ENCODE measurements at regions of chr1 and their contacts with region 1.

Region 1: DNA sequence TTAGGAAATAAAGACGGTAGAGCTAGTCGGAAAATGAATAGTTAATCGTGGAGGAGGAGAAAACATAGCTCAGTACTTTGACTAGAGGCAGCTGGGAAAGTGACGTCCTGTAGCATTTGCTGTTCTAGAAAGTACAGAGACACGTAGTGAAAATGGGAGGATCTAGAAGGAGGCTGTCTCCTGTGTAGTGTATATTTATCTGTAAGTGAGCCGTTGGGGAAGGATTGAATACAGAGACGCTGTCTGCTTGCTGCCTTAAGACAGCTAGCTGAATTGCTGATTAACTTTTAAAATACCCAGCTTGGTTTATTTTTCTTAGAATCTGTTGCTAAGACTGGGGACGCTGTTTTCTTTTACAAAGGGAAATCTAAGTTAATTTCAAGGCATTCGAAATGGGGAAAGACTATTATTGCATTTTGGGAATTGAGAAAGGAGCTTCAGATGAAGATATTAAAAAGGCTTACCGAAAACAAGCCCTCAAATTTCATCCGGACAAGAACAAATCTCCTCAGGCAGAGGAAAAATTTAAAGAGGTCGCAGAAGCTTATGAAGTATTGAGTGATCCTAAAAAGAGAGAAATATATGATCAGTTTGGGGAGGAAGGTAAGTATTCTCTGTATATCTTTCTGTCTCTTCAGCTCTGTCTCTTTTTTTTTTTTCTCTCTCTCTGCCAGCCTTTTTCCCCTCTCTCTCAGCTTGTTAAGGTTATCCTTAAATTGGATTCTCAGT is at the start of gene DNAJB4:
- DNase-seq: peak; percentile 82
- ATAC-seq: peak; percentile 98
- H3K4me3 Mint-ChIP-seq: peak within 1 kb of the TSS; percentile 85
- H3K27ac Mint-ChIP-seq: peak within 1 kb of the TSS; percentile 99
- H3K4me1 Mint-ChIP-seq: peaks cover 41% of the 10 kb centered on the region
- H3K27me3 Mint-ChIP-seq: peaks cover 2% of the 10 kb centered on the region
- CTCF ChIP-seq: no peak
- total RNA-seq, gene DNAJB4: 9.7 to 12.0 TPM

Region 2: DNA sequence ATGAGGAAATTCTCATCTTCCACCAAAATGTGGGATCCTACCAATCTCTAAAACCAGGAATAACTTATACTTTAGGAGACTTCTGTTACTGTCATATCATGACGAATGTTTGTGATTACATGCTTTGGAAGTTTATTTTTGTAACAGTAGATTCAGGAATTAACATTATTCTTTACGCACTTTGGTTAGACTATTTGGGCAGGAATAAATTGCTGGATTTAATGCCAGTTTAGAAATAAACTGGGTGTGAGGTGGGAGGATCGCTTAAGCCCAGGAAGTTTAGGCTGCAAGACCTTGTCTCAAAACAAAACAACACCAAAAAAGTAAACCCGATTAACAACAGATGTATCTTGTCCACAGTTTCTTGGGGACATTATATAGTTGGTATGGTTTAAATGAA is 173.3 kb before region 1 on chr1:
- CTCF ChIA-PET with region 1: no interaction called
- POLR2A ChIA-PET with region 1: no interaction called
- intact Hi-C with region 1: no loop called
- DNase-seq: no peak
- ATAC-seq: no peak
- H3K4me3 Mint-ChIP-seq: no peak overlapping the region
- H3K27ac Mint-ChIP-seq: no peak overlapping the region
- H3K4me1 Mint-ChIP-seq: peaks cover 4% of the 10 kb centered on the region
- H3K27me3 Mint-ChIP-seq: no peaks in the 10 kb centered on the region
- CTCF ChIP-seq: no peak

Region 3: GRCh38 chr1:77841574-77841973 is 163.3 kb before region 1 on chr1:
- CTCF ChIA-PET with region 1: no interaction called
- POLR2A ChIA-PET with region 1: no interaction called
- intact Hi-C with region 1: no loop called
- DNase-seq: no peak
- ATAC-seq: no peak
- H3K4me3 Mint-ChIP-seq: no peak overlapping the region
- H3K27ac Mint-ChIP-seq: no peak overlapping the region
- H3K4me1 Mint-ChIP-seq: peaks cover 6% of the 10 kb centered on the region
- H3K27me3 Mint-ChIP-seq: no peaks in the 10 kb centered on the region
- CTCF ChIP-seq: no peak

Region 4: GRCh38 chr1:77986810-77987209 is 18.1 kb before region 1 on chr1:
- CTCF ChIA-PET with region 1: interaction called, 17 read pairs
- POLR2A ChIA-PET with region 1: interaction called, 203 read pairs
- intact Hi-C with region 1: no loop called
- DNase-seq: peak; percentile 61
- ATAC-seq: peak; percentile 94
- H3K4me3 Mint-ChIP-seq: no peak overlapping the region
- H3K27ac Mint-ChIP-seq: peak overlapping the region; percentile 27
- H3K4me1 Mint-ChIP-seq: peaks cover 58% of the 10 kb centered on the region
- H3K27me3 Mint-ChIP-seq: no peaks in the 10 kb centered on the region
- CTCF ChIP-seq: no peak

Region 5: GRCh38 chr1:78015148-78015547 is 10.3 kb after region 1 on chr1:
- CTCF ChIA-PET with region 1: interaction called, 3 read pairs
- POLR2A ChIA-PET with region 1: interaction called, 10 read pairs
- intact Hi-C with region 1: no loop called
- DNase-seq: no peak
- ATAC-seq: no peak
- H3K4me3 Mint-ChIP-seq: no peak overlapping the region
- H3K27ac Mint-ChIP-seq: no peak overlapping the region
- H3K4me1 Mint-ChIP-seq: peaks cover 8% of the 10 kb centered on the region
- H3K27me3 Mint-ChIP-seq: no peaks in the 10 kb centered on the region
- CTCF ChIP-seq: no peak

Region 6: GRCh38 chr1:78045926-78046778 is 41.3 kb after region 1 on chr1 and contains the start of gene GIPC2:
- CTCF ChIA-PET with region 1: interaction called, 5 read pairs
- POLR2A ChIA-PET with region 1: interaction called, 34 read pairs
- intact Hi-C with region 1: loop called (anchors 2 kb)
- DNase-seq: peak; percentile 42
- ATAC-seq: peak; percentile 53
- H3K4me3 Mint-ChIP-seq: peak within 1 kb of the TSS; percentile 76
- H3K27ac Mint-ChIP-seq: peak within 1 kb of the TSS; percentile 30
- H3K4me1 Mint-ChIP-seq: peaks cover 37% of the 10 kb centered on the region
- H3K27me3 Mint-ChIP-seq: peaks cover 42% of the 10 kb centered on the region
- CTCF ChIP-seq: no peak
- total RNA-seq, gene GIPC2: 0.18 to 0.41 TPM